Calu3 (cell line): ENCODE measurements at regions of chr3 and their contacts with region 1.

Region 1: DNA sequence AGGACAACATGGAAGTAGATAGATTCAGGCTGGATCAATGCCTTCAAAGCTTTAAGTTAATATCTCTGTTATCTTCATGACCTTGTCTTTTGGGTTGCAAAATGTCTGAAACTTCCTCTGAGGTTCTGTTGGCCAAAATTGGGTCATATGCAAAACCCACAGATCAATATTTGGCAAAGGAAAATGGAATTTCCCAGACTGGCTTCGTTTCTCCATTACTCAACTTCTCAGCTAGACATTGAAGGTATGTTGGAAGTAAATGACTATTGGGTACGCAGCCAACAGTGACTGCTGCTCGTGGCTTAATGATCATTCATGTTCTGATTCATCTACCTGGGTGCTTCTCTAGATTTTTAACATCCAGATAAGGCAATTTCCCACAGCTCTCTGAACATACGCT is 675.4 kb upstream of the SGO1 start:
- DNase-seq: peak; percentile 43
- H3K4me3 Mint-ChIP-seq: no peak overlapping the region
- H3K27ac Mint-ChIP-seq: no peak overlapping the region
- H3K4me1 Mint-ChIP-seq: peaks cover 19% of the 10 kb centered on the region
- H3K27me3 Mint-ChIP-seq: no peaks in the 10 kb centered on the region
- CTCF ChIP-seq: no peak

Region 2: DNA sequence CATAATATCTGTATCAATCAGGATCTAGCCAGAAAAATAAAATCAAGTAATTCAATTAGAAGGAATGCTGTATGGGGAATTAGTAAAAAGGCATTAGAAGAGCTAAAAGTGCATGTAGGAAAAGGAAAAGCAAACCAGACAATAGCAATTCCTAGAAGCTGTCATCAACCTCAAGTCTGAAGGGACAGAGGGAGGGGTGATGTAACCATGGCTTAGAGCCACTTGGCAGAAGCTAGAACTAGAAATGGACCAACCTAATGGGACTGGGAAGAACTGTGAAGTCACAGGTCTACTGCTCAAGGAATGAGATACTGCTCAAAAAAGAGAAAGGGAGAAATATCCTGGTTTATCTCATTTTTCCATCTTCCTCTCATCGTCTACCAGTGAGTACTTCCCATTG is 84.8 kb before region 1 on chr3:
- CTCF ChIA-PET with region 1: no interaction called
- intact Hi-C with region 1: loop called (anchors 10 kb)
- DNase-seq: no peak
- H3K4me3 Mint-ChIP-seq: no peak overlapping the region
- H3K27ac Mint-ChIP-seq: no peak overlapping the region
- H3K4me1 Mint-ChIP-seq: peaks cover 12% of the 10 kb centered on the region
- H3K27me3 Mint-ChIP-seq: no peaks in the 10 kb centered on the region
- CTCF ChIP-seq: no peak

Region 3: GRCh38 chr3:20924646-20925385 is 63.4 kb after region 1 on chr3:
- CTCF ChIA-PET with region 1: no interaction called
- intact Hi-C with region 1: loop called (anchors 2 kb)
- DNase-seq: peak; percentile 16
- H3K4me3 Mint-ChIP-seq: peak overlapping the region; percentile 28
- H3K27ac Mint-ChIP-seq: peak overlapping the region; percentile 64
- H3K4me1 Mint-ChIP-seq: peaks cover 40% of the 10 kb centered on the region
- H3K27me3 Mint-ChIP-seq: no peaks in the 10 kb centered on the region
- CTCF ChIP-seq: no peak